Tibial artery (tissue), 4 donors: ENCODE measurements at regions of chr5 and their contacts with region 1.

Region 1: DNA sequence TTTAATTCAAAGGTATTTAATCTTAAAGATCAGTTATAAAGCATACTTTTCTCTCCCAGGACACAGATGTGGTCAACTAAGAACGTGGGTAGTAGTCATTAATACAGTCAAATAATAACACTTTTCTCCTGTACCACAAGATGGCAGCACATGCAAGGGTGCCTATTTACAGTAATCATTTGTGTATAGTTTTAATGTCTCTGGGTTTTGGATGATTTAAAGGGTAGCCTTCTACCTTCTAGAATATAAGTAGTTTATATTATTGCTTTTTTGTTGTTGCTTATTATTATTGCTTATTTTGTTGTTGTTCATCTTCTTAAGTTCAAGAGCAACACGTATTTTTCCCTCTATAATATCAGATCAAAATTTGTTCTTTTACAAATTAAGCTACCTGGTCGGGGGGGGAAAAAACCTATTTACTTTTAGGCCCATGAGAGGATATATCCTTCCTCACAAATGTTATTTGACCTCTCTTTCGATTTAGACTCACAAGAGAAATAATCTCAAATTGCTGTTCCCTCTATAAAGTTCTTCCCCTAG is 59.6 kb upstream of the SLC27A6 start:
- DNase-seq: no peak
- H3K4me3 ChIP-seq: no peak overlapping the region
- H3K27ac ChIP-seq: no peak overlapping the region
- H3K4me1 ChIP-seq: no peaks in the 10 kb centered on the region
- H3K27me3 ChIP-seq: no peaks in the 10 kb centered on the region
- CTCF ChIP-seq: peak; percentile 65 to 70

Region 2: DNA sequence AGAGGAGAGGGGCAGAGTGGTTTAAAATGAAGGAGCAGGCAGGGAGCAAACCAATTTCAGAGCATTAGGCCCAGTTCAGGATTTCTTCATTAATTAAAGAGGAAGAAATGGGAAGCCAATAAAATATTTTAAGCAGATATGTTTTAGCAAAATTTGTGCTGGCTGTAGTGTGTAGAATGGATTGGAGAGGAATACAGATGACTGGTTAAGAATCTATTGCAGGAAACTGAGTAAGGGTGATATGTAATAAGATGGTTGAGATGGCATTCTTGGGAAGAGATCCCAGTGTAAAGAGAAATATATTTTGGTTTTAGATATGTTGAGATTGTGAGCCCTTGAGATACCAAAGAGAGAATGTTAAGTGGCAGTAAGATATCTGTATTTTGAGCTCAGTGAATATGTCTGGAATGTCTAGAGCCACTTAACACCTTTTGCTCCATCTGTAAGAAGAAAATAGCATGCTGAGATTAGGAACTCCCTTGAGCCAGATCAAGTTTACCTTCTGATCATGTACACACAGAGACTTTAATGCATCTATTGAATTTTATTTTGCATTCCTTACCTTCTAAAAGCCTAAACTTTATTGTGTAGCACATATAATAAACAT is 19.9 kb before region 1 on chr5:
- intact Hi-C with region 1: no loop called
- DNase-seq: no peak
- H3K4me3 ChIP-seq: no peak overlapping the region
- H3K27ac ChIP-seq: no peak overlapping the region
- H3K4me1 ChIP-seq: no peaks in the 10 kb centered on the region
- H3K27me3 ChIP-seq: no peaks in the 10 kb centered on the region
- CTCF ChIP-seq: no peak

Region 3: GRCh38 chr5:128992331-128992730 is 86.7 kb after region 1 on chr5:
- intact Hi-C with region 1: no loop called
- DNase-seq: no peak
- H3K4me3 ChIP-seq: no peak overlapping the region
- H3K27ac ChIP-seq: no peak overlapping the region
- H3K4me1 ChIP-seq: no peaks in the 10 kb centered on the region
- H3K27me3 ChIP-seq: no peaks in the 10 kb centered on the region
- CTCF ChIP-seq: no peak

Region 4: DNA sequence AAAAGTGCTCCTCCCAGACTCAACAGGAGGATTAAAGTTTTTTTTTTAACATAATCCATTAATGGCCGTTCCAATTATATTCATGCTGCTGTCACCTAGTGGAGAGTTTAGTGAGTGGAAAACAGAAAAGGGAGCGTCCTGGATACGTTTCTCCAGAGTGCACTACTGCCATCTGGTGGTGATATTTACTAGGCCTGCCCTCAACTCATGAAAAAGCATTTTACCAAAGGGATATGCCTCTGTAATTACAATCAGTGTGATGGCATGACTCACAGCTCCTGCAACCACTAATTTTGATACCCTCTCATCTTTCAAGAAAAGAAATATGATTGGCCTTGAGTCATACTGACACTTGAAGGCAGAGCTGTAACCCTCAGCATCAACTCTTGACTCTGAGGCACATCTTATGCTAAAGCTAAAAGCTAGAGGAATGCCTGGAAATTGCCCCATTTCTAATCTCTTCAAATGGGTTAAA is 862.3 kb after region 1 on chr5:
- intact Hi-C with region 1: loop called (anchors 5 kb)
- DNase-seq: peak; percentile 55 to 65
- H3K4me3 ChIP-seq: no peak overlapping the region
- H3K27ac ChIP-seq: no peak overlapping the region
- H3K4me1 ChIP-seq: peaks cover 0 to 4% (median 0%) of the 10 kb centered on the region in 4 donors
- H3K27me3 ChIP-seq: no peaks in the 10 kb centered on the region
- CTCF ChIP-seq: peak; percentile 87 to 97